ENCODE measurements at regions of chr21 and their contacts with region 1.

Region 1: GRCh38 chr21:37267269-37268184 is at the start of gene VPS26C:
- DNase-seq: peak; percentile 99
- ATAC-seq: peak; percentile 95
- total RNA-seq, gene VPS26C: 43.9 TPM

Region 2: GRCh38 chr21:37338671-37339551 is 71.4 kb after region 1 on chr21:
- intact Hi-C with region 1: no loop called
- DNase-seq: peak; percentile 57
- ATAC-seq: peak; percentile 93

Region 3: GRCh38 chr21:37366482-37367316 is 99.2 kb after region 1 on chr21 and contains the start of gene DYRK1A:
- intact Hi-C with region 1: loop called (anchors 2 kb)
- DNase-seq: peak; percentile 98
- ATAC-seq: peak; percentile 93
- total RNA-seq, gene DYRK1A: 62.7 TPM

Region 4: GRCh38 chr21:37452227-37452626 is 184.7 kb after region 1 on chr21:
- intact Hi-C with region 1: loop called (anchors 10 kb)
- DNase-seq: peak; percentile 50
- ATAC-seq: peak; percentile 82

Measured in Right ventricle myocardium superior (tissue), 1 donor.